A549 (cell line): ENCODE measurements at regions of chr15 and their contacts with region 1.

Region 1: DNA sequence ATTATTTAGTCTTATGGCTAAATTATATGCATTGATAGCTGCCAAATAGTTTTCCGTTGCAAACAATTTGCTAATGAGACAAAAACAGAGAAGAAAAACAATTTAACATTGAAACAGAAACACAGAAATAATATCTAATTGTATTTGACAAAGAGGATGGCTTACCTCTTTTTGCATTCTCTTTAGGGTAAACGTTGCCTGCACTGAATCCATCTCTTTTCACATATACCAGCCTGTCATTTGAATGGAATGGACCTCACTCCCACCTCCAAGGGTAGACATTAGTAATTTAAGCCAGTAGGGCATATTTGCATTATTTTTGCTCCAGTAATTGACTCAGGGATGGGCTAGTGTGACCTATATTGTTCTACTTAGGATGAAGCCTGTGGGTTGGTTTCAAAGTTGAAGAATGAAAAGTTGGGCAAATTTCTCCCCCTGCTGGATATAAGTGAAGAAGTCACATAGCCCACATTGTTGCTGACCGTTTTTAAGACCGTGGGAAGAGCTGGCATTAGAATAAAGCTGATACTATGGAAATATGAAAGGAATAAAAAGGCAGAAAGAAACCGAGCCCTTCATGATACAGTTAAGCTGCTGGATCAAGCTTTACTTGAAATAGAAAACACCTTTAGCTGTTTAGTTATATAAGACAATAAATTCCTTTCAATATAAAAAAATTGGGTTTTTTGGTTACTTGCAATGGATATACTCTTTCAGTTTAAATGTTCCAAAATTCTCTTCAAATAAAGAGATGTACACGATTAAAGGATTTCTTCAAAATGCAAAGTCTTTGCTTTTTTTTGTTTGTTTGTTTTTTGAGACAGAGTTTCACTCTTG is 26.9 kb downstream of the PIERCE2 start:
- DNase-seq: peak; percentile 64 to 71
- ATAC-seq: peak; percentile 96 to 97
- H3K4me3 ChIP-seq: no peak overlapping the region
- H3K27ac ChIP-seq: no peak overlapping the region
- H3K4me1 ChIP-seq: peaks cover 4% of the 10 kb centered on the region; the same call in 1 of the 3 replicates
- CTCF ChIP-seq: peak; percentile 78
- EP300 ChIP-seq: no peak
- POLR2A ChIP-seq: no peak
- RAD21 ChIP-seq: peak; percentile 82 to 84

Region 2: DNA sequence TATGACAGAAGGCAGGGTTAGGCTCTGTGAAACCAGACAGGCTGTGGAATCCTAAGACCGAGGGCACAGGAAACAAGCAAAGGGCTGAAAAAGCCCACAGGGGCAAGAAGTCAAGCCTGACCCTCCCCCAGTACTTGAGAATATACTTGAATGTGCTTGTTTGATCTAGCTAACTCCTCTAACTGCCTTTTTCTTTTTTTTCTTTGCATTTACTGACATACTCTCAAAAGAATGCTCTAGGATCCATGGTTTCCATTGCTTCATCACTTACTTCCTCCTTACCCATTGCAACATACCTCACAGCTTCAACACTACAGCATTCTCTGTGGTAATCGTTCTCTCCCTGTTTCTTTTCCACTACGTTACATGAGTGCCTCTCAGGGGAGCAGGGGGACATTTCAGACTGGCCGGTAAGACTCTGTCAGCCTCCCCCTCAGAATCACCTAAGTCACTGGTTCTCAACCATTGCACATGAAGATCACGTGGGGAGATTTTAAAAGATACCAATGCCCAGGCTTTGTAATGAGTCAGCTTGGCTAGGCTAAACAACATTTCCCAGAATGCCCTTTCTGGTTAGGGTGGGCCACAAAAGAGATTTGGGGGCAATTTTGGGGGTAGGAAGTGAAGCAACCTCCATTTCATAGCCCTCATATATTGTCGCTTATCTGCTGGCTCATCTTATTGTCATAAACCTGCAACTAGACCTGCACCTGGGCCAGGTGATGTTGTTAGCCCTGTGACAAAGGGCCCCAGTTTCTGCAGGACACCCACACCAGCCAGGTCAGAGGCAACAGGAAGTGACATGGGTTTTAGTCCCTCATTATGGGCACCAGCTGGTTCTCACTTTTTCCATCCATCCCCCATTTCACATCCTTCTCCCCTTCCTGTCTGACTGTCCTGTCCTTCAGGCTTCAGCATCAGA is 213.9 kb before region 1 on chr15:
- CTCF ChIA-PET with region 1: interaction called, 24 read pairs
- POLR2A ChIA-PET with region 1: no interaction called
- DNase-seq: peak; percentile 20 to 63
- ATAC-seq: peak; percentile 81 to 82
- H3K4me3 ChIP-seq: no peak overlapping the region
- H3K27ac ChIP-seq: peak overlapping the region; percentile 58 to 82
- H3K4me1 ChIP-seq: peaks cover 21% of the 10 kb centered on the region
- CTCF ChIP-seq: no peak
- EP300 ChIP-seq: 0 out of 5 replicates have a peak, but pooled peaks of 1 of the 2 experiments have one; percentile 15
- POLR2A ChIP-seq: no peak
- RAD21 ChIP-seq: no peak

Region 3: DNA sequence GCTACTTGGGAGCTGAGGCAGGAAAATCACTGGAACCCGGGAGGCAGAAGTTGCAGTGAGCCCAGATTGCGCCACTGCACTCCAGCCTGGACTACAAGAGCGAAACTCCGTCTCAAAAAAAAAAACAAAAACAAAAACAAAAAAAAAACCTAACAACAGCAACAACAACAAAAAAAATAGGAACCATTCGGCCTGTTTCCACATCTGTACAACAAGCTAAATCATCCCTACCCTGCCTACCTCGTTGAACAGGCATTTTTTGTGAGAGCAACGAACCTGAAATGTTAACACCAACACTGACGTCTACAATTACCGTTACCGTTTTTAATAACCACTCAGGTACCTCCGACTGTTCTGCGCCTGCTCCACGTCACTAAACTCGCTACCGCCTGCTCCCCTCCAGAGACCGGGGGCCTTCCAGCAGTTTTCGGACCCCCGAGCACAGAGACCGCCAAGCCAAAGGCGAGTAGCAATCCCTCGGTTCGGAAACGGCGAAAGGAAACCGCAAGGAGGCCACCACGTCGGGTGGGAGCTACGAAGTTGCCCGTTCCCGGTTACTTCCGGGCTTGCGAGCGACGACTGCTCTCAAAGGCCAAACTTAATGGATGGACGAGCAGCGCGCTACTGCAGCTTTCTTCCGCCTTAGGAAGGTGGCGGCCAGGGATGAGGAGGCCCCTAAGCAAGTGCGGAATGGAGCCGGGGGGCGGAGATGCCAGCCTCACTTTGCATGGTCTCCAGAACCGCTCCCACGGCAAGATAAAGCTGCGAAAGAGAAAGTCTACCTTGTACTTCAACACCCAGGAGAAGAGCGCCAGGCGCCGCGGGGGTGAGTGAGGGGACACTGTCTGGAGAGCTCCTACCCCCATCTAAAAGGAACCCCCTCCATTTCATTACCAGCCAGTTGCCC is 116.4 kb before region 1 on chr15 and contains the starts of genes PIGB and PIGBOS1:
- CTCF ChIA-PET with region 1: interaction called, 14 read pairs
- POLR2A ChIA-PET with region 1: interaction called, 8 read pairs
- DNase-seq: peak; percentile 84 to 96
- ATAC-seq: peak; percentile 99
- H3K4me3 ChIP-seq: peak within 1 kb of the TSS; percentile 62
- H3K27ac ChIP-seq: peak within 1 kb of the TSS; percentile 85 to 90
- H3K4me1 ChIP-seq: peaks cover 21% of the 10 kb centered on the region
- CTCF ChIP-seq: no peak
- EP300 ChIP-seq: no peak
- POLR2A ChIP-seq: peak; percentile 81
- RAD21 ChIP-seq: 0 out of 5 replicates have a peak, but pooled peaks have one; percentile 10 to 26
- polyA plus RNA-seq, gene PIGB: 43.3 and 43.4 TPM in 2 replicates
- polyA plus RNA-seq, gene PIGBOS1: 26.5 and 42.3 TPM in 2 replicates

Region 4: DNA sequence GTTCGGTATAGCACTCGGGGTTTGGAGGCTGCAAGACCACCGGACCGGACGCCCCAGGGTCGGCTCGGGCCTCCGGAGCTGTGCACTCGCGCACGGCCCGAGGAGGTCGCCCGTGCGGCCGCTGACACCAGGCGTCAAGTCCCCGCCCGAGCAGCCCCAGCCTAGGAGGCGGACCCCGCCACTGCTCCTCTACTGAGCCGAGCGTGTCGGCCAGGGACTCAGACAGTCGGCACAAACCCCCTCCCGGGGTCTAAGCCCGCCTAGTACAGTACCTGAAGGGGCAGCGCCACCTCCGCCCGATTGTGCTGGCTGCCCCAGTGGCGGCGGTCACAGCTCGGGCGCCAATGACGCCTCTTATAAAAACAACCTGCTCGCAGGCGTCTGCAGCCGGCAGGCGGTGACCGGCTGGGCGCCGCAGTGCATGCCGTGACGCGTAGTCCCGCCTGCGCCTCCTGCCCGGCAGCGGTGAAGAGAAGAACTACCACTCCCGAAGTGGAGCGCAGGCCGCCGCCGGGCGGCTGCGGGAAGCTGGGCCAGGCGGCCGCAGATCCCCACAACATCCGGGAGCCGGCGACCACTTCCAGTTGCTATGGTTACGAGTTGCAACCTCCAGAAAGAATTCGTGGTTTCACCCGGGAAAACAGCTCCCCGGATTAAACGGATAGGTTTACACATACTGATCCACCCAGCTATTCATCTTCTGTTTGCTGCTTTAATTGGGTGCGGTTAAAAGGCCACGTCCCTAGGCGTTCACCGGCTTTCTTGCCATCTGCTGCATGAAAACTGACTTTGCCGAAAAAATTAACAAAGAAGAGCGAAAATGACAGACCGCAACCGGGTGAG is 27.0 kb before region 1 on chr15 and contains the starts of genes CCPG1 and PIERCE2:
- CTCF ChIA-PET with region 1: interaction called, 28 read pairs
- POLR2A ChIA-PET with region 1: interaction called, 4 read pairs
- DNase-seq: peak; percentile 94 to 97
- ATAC-seq: peak; percentile 96 to 97
- H3K4me3 ChIP-seq: peak within 1 kb of the TSS; percentile 57
- H3K27ac ChIP-seq: peak within 1 kb of the TSS; percentile 75 to 88
- H3K4me1 ChIP-seq: peaks cover 31% of the 10 kb centered on the region
- CTCF ChIP-seq: no peak; the same call in none of the 3 replicates
- EP300 ChIP-seq: no peak
- POLR2A ChIP-seq: peak; percentile 57
- RAD21 ChIP-seq: peak in 1 of 2 experiments; percentile 52; a peak in 3 of 5 replicates
- polyA plus RNA-seq, gene CCPG1: 173 and 176 TPM in 2 replicates
- polyA plus RNA-seq, gene PIERCE2: 13.4 and 14.8 TPM in 2 replicates

Region 5: DNA sequence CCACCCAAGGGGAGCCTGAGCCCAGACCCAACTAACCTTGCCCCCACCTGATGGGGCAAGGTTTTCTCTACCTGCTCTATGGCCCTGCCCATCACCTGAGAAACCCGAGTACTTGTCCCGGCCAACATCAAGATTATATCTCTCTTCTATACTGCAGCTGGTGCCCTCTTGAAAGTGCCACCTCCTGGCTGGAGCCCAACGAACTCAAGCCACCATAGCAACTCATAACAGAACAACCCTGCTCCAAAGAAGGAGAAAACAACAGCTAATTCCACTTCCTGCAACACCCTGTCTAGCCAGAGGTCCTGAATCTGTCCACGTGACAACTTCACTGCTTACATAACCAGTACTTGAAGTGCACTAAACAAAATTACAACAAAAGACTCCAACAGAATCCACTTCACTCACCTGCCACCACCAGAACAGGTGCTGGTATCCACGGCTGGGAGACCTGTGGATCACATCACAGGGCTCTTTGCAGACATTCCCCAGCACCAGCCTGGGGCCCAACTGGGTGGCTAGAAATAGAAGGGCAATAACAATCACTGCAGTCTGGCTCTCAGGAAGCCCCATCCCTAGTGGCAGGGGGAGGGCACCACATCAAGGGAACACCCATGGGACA is 22.3 kb after region 1 on chr15:
- CTCF ChIA-PET with region 1: interaction called, 10 read pairs
- POLR2A ChIA-PET with region 1: no interaction called
- DNase-seq: no peak
- ATAC-seq: no peak
- H3K4me3 ChIP-seq: no peak overlapping the region
- H3K27ac ChIP-seq: no peak overlapping the region
- H3K4me1 ChIP-seq: no peaks in the 10 kb centered on the region
- CTCF ChIP-seq: no peak
- EP300 ChIP-seq: no peak
- POLR2A ChIP-seq: no peak
- RAD21 ChIP-seq: no peak

Region 6: DNA sequence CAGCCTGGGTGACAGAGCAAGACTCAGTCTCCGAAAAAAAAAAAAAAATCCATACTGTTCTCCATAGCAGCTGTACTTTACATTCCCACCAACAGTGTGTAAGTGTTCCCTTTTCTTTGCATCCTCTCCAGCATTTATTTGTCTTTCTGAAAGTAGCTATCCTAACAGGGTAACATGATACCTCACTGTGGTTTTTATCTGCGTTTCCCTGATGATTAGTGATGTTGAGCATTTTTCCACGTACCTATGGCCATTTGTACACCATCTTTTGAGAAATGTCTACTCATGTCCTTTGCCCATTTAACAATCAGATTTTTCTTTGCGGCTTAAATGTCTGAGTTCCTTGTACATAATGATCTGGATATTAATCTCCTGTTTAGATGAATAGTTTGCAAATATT is 689.2 kb after region 1 on chr15:
- CTCF ChIA-PET with region 1: no interaction called
- POLR2A ChIA-PET with region 1: no interaction called
- DNase-seq: no peak
- ATAC-seq: no peak
- H3K4me3 ChIP-seq: no peak overlapping the region
- H3K27ac ChIP-seq: no peak overlapping the region
- H3K4me1 ChIP-seq: no peaks in the 10 kb centered on the region
- CTCF ChIP-seq: no peak
- EP300 ChIP-seq: no peak
- POLR2A ChIP-seq: no peak
- RAD21 ChIP-seq: no peak